SK-N-SH (cell line): ENCODE measurements at regions of chr17 and their contacts with region 1.

Region 1: GRCh38 chr17:21119247-21119918 is 7.4 kb upstream of the DHRS7B start:
- DNase-seq: peak; percentile 71
- H3K4me3 ChIP-seq: peak overlapping the region in 1 of 2 experiments; percentile 30; a peak in 1 of 4 replicates
- H3K27ac ChIP-seq: no peak overlapping the region
- H3K4me1 ChIP-seq: no peaks in the 10 kb centered on the region
- H3K27me3 ChIP-seq: no peaks in the 10 kb centered on the region; the same call in 1 of the 2 replicates
- CTCF ChIP-seq: peak; percentile 86
- EP300 ChIP-seq: no peak
- RAD21 ChIP-seq: peak; percentile 81

Region 2: GRCh38 chr17:21075739-21076085 is 43.7 kb before region 1 on chr17:
- CTCF ChIA-PET with region 1: no interaction called
- POLR2A ChIA-PET with region 1: no interaction called
- DNase-seq: no peak
- H3K4me3 ChIP-seq: no peak overlapping the region
- H3K27ac ChIP-seq: peak overlapping the region in 1 of 2 experiments; percentile 65; a peak in 2 of 4 replicates
- H3K4me1 ChIP-seq: peaks cover 0 to 18% of the 10 kb centered on the region in 2 experiments; a peak in 1 of 4 replicates
- H3K27me3 ChIP-seq: no peaks in the 10 kb centered on the region; the same call in 1 of the 2 replicates
- CTCF ChIP-seq: no peak
- EP300 ChIP-seq: no peak
- RAD21 ChIP-seq: no peak

Region 3: DNA sequence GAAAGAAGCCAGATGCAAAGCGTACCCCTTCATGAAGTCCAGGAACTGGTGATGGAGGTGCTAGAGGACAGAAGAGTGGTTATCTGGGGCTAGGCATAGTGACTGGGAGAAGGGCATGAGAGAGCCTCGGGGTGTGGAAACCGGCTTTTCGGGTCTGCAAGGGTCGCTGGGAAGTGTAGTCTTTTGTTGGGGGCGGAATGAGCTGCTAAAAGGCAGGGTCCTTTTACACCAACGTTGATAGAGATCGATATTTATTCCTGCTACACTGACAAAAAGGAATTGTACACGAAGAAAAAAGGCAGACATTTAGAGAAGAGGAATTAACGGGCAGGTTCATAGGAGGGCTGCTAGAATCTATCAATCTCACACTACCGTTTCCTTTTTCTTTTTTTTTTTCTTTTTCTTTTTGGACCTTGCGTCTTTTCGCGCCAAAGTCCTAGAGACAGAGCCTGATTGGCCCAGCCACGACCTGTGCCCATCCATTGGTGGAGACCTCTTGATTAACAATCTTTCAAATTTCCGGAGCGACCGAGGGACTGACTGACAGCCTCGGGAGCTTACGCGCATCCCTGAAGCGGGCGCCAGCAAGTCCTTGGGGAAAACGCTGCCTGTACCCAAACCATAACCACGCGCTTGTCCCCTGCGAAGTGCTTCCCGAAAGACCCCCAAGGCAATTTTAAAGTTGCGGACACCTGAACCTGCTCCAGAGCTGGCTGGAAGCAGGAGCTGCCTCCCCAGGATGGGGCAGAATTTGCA is 20.3 kb before region 1 on chr17:
- CTCF ChIA-PET with region 1: interaction called, 33 read pairs
- POLR2A ChIA-PET with region 1: no interaction called
- DNase-seq: peak; percentile 90
- H3K4me3 ChIP-seq: peak overlapping the region; percentile 64 to 100
- H3K27ac ChIP-seq: peak overlapping the region in 1 of 2 experiments; percentile 62; a peak in 2 of 4 replicates
- H3K4me1 ChIP-seq: peaks cover 0 to 3% of the 10 kb centered on the region in 2 experiments; a peak in 1 of 4 replicates
- H3K27me3 ChIP-seq: no peaks in the 10 kb centered on the region
- CTCF ChIP-seq: no peak
- EP300 ChIP-seq: no peak
- RAD21 ChIP-seq: no peak

Region 4: DNA sequence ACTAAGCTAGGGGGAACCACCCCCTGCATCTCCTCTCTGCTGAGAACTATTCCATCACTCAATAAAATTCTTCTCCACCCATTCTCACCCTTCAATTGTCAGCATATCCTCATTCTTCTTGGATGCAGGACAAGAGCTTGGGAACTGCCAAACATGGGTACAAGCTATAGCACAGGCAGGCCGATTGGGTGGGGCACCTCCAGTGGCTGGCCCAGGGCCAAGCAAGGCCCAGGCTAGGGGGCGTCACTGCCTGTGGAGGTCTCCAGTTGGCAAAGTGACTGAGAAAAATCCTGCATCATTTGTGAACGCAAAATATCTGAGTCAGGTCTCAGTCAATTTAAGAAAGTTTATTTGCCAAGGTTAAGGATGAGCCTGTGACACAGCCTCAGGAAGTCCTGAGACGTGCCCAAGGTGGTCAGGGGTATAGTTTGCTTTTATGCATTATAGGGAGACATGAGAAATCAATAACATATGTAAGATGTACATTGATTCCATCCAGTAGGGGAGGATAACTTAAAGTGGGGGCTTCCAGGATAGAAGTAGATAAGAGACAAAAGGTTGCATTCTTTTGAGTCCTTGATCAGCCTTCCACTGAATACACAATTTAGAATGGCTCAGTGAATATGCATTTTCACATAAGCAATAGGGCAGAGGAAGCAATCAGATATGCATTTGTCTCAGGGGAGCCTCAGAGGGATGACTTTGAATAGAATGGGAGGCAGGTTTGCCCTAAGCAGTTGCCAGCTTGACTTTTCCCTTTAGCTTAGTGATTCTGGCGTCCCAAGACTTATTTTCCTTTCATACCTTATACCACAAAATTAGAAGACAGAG is 14.1 kb before region 1 on chr17:
- CTCF ChIA-PET with region 1: interaction called, 33 read pairs
- POLR2A ChIA-PET with region 1: no interaction called
- DNase-seq: no peak
- H3K4me3 ChIP-seq: no peak overlapping the region
- H3K27ac ChIP-seq: no peak overlapping the region
- H3K4me1 ChIP-seq: no peaks in the 10 kb centered on the region
- H3K27me3 ChIP-seq: peaks cover 7% of the 10 kb centered on the region; the same call in 1 of the 2 replicates
- CTCF ChIP-seq: no peak
- EP300 ChIP-seq: no peak
- RAD21 ChIP-seq: no peak